B cell (primary cell): ENCODE measurements at regions of chr11 and their contacts with region 1.

Region 1: DNA sequence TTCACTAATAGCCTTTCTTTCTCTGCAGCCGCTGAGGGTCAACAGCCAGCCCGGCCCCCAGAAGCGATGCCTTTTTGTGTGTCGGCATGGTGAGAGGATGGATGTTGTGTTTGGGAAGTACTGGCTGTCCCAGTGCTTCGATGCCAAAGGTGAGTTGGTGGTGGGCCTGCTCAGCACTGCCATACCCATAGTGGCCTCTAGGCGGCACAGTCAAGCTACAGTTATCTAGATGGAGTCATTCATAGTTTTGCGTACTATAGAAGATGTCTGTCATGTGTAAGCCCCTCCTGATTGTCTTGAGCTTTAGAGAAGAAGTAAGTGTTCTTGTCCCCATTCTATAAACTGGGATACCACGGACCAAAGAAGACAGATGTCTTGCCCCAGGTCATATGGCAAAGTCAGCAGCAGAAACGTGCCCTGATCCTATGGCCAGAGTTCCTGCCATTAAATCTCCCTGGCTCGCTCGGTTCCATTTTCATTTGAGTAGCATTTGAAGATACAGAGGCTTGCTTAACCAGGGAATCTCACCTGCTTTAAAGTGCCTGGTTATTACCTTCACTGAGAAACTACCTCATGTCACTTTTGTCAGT is 42.1 kb upstream of the CRTAM start:
- DNase-seq: peak; percentile 75
- ATAC-seq: peak; percentile 93
- H3K4me3 ChIP-seq: no peak overlapping the region
- H3K4me3 Mint-ChIP-seq: no peak overlapping the region
- H3K27ac ChIP-seq: no peak overlapping the region
- H3K27ac Mint-ChIP-seq: no peak overlapping the region
- H3K4me1 ChIP-seq: no peaks in the 10 kb centered on the region
- H3K4me1 Mint-ChIP-seq: peaks cover 4% of the 10 kb centered on the region
- H3K27me3 ChIP-seq: no peaks in the 10 kb centered on the region
- H3K27me3 Mint-ChIP-seq: no peaks in the 10 kb centered on the region
- CTCF ChIP-seq: peak; percentile 96

Region 2: DNA sequence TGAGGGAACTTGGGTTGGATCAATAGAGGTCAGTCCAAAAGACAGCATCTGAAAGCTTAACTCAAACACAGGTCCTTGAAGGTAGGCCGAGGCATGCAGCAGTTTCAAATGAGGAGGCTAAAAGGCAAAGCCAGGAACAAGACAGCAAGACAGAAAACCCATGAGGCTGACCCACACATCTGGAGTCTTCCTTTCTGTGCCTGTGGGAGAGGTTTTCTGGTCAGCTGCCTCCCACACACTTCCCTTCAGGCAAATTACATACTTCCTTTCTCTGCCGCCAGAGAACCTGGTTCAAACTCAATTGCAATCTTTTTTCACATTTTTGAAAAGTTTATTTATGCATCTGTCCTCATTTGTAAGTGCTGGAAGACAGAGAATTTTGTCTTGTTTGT is 12.3 kb after region 1 on chr11:
- CTCF ChIA-PET with region 1: interaction called, 48 read pairs
- POLR2A ChIA-PET with region 1: no interaction called
- intact Hi-C with region 1: no loop called
- DNase-seq: peak; percentile 33
- ATAC-seq: no peak
- H3K4me3 ChIP-seq: peak overlapping the region in 2 of 5 experiments; percentile 1 to 10
- H3K4me3 Mint-ChIP-seq: peak overlapping the region; percentile 36
- H3K27ac ChIP-seq: no peak overlapping the region
- H3K27ac Mint-ChIP-seq: peak overlapping the region; percentile 1
- H3K4me1 ChIP-seq: peaks cover 34 to 39% of the 10 kb centered on the region in 2 donors
- H3K4me1 Mint-ChIP-seq: peaks cover 48% of the 10 kb centered on the region
- H3K27me3 ChIP-seq: no peaks in the 10 kb centered on the region
- H3K27me3 Mint-ChIP-seq: no peaks in the 10 kb centered on the region
- CTCF ChIP-seq: no peak

Region 3: GRCh38 chr11:122832721-122833470 is 36.7 kb after region 1 on chr11:
- CTCF ChIA-PET with region 1: interaction called, 12 read pairs
- POLR2A ChIA-PET with region 1: no interaction called
- intact Hi-C with region 1: no loop called
- DNase-seq: peak; percentile 51
- ATAC-seq: peak; percentile 33
- H3K4me3 ChIP-seq: no peak overlapping the region
- H3K4me3 Mint-ChIP-seq: peak overlapping the region; percentile 33
- H3K27ac ChIP-seq: no peak overlapping the region
- H3K27ac Mint-ChIP-seq: no peak overlapping the region
- H3K4me1 ChIP-seq: peaks cover 15 to 24% of the 10 kb centered on the region in 2 donors
- H3K4me1 Mint-ChIP-seq: peaks cover 20% of the 10 kb centered on the region
- H3K27me3 ChIP-seq: peaks cover 0 to 28% (median 1%) of the 10 kb centered on the region in 4 experiments
- H3K27me3 Mint-ChIP-seq: peaks cover 14% of the 10 kb centered on the region
- CTCF ChIP-seq: no peak

Region 4: GRCh38 chr11:122863704-122864326 is 67.6 kb after region 1 on chr11:
- CTCF ChIA-PET with region 1: interaction called, 319 read pairs
- POLR2A ChIA-PET with region 1: no interaction called
- intact Hi-C with region 1: no loop called
- DNase-seq: peak; percentile 56
- ATAC-seq: peak; percentile 31
- H3K4me3 ChIP-seq: no peak overlapping the region
- H3K4me3 Mint-ChIP-seq: no peak overlapping the region
- H3K27ac ChIP-seq: no peak overlapping the region
- H3K27ac Mint-ChIP-seq: no peak overlapping the region
- H3K4me1 ChIP-seq: peaks cover 0 to 8% of the 10 kb centered on the region in 2 donors
- H3K4me1 Mint-ChIP-seq: peaks cover 10% of the 10 kb centered on the region
- H3K27me3 ChIP-seq: peaks cover 0 to 24% (median 6%) of the 10 kb centered on the region in 4 experiments
- H3K27me3 Mint-ChIP-seq: peaks cover 60% of the 10 kb centered on the region
- CTCF ChIP-seq: peak; percentile 94

Region 5: DNA sequence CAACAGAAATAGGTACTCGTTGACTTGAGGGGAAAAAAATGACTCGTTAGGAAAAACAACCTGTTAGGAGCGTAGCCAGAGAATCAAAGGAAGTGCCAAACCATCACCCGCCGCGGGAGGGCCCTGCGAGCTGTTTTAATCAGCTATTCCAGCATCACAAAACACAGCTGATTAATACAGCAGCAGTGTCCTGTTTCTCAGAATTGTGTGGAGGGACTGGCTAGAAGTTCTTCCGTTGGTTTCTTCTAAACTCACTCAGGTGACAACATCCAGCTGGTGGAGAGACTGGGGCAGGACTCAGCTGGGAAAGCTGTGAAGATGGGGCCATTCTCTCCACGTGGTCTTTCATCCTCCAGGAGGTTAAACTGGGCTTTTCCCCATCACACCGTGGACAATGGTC is 237.7 kb after region 1 on chr11:
- CTCF ChIA-PET with region 1: interaction called, 10 read pairs
- POLR2A ChIA-PET with region 1: no interaction called
- intact Hi-C with region 1: no loop called
- DNase-seq: no peak
- ATAC-seq: no peak
- H3K4me3 ChIP-seq: no peak overlapping the region
- H3K4me3 Mint-ChIP-seq: no peak overlapping the region
- H3K27ac ChIP-seq: no peak overlapping the region
- H3K27ac Mint-ChIP-seq: no peak overlapping the region
- H3K4me1 ChIP-seq: no peaks in the 10 kb centered on the region
- H3K4me1 Mint-ChIP-seq: no peaks in the 10 kb centered on the region
- H3K27me3 ChIP-seq: no peaks in the 10 kb centered on the region
- H3K27me3 Mint-ChIP-seq: peaks cover 11% of the 10 kb centered on the region
- CTCF ChIP-seq: no peak